HCT116 (cell line): ENCODE measurements at regions of chr11 and their contacts with region 1.

Region 1: GRCh38 chr11:57345555-57346211 is 7.5 kb downstream of the P2RX3 start:
- DNase-seq: peak; percentile 76
- ATAC-seq: peak; percentile 84
- H3K4me3 ChIP-seq: no peak overlapping the region
- H3K27ac ChIP-seq: no peak overlapping the region
- H3K4me1 ChIP-seq: peaks cover 3 to 19% of the 10 kb centered on the region in 2 experiments; a peak in 3 of 4 replicates
- H3K27me3 ChIP-seq: no peaks in the 10 kb centered on the region
- CTCF ChIP-seq: peak; percentile 44 to 69 (median 67); a peak in 5 of 6 replicates
- POLR2A ChIP-seq: no peak
- RAD21 ChIP-seq: peak; percentile 74

Region 2: DNA sequence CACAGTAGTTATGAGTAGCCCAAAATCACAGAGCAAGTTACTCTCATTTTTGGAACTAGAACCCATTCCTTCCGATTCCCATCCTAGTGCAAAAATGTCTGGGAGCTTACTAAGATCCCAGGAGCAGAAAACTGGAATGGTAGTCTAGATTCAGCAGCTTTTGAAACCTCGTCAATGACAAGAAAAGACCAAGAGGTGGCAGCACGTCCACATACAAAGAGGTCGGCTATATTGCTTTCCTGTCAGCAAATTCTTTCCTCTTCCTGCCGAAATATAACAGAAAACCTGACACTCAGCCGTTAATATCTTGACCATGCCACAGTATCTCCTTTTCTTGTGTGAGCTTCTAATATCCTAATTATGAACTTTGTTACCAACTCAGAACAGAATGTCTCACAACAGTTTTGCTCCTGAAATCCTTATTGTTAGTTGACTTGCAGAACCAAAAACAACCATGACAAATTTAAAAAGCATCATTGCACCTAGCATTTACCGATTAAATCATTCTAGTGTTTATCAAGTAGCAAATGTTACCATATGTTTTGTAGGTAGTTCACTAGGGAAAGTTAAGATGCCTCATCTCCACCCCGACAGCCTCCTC is 504.4 kb before region 1 on chr11:
- CTCF ChIA-PET with region 1: interaction called, 4 read pairs
- POLR2A ChIA-PET with region 1: no interaction called
- RAD21 ChIA-PET with region 1: no interaction called
- intact Hi-C with region 1: loop called (anchors 5 kb)
- DNase-seq: peak; percentile 27
- ATAC-seq: peak; percentile 57
- H3K4me3 ChIP-seq: no peak overlapping the region
- H3K27ac ChIP-seq: no peak overlapping the region
- H3K4me1 ChIP-seq: no peaks in the 10 kb centered on the region
- H3K27me3 ChIP-seq: no peaks in the 10 kb centered on the region
- CTCF ChIP-seq: peak; percentile 35 to 65 (median 54); a peak in 5 of 6 replicates
- POLR2A ChIP-seq: no peak
- RAD21 ChIP-seq: peak; percentile 68

Region 3: GRCh38 chr11:57456960-57457642 is 111.4 kb after region 1 on chr11:
- CTCF ChIA-PET with region 1: interaction called, 19 read pairs
- POLR2A ChIA-PET with region 1: interaction called, 4 read pairs
- RAD21 ChIA-PET with region 1: interaction called in 1 of 2 experiments, 3 read pairs
- intact Hi-C with region 1: loop called (anchors 5 kb)
- DNase-seq: peak; percentile 79
- ATAC-seq: peak; percentile 71
- H3K4me3 ChIP-seq: peak overlapping the region in 1 of 2 experiments; percentile 67; a peak in 2 of 4 replicates
- H3K27ac ChIP-seq: no peak overlapping the region
- H3K4me1 ChIP-seq: peaks cover 16 to 42% of the 10 kb centered on the region in 2 experiments; a peak in 3 of 4 replicates
- H3K27me3 ChIP-seq: peaks cover 3% of the 10 kb centered on the region; the same call in 1 of the 2 replicates
- CTCF ChIP-seq: peak; percentile 89 to 99 (median 89)
- POLR2A ChIP-seq: no peak
- RAD21 ChIP-seq: peak; percentile 94

Region 4: GRCh38 chr11:57530596-57531507 is 185.2 kb after region 1 on chr11 and contains the start of gene TIMM10:
- CTCF ChIA-PET with region 1: interaction called, 8 read pairs
- POLR2A ChIA-PET with region 1: no interaction called
- RAD21 ChIA-PET with region 1: no interaction called
- intact Hi-C with region 1: loop called (anchors 2 kb)
- DNase-seq: peak; percentile 99
- ATAC-seq: peak; percentile 95
- H3K4me3 ChIP-seq: peak within 1 kb of the TSS; percentile 64 to 84
- H3K27ac ChIP-seq: peak within 1 kb of the TSS; percentile 61
- H3K4me1 ChIP-seq: peaks cover 16 to 17% of the 10 kb centered on the region in 2 experiments
- H3K27me3 ChIP-seq: no peaks in the 10 kb centered on the region
- CTCF ChIP-seq: no peak
- POLR2A ChIP-seq: peak; percentile 75
- RAD21 ChIP-seq: peak; percentile 16; the same call in 1 of the 2 replicates
- total RNA-seq, gene TIMM10: 65.6 TPM

Region 5: GRCh38 chr11:57903564-57904123 is 558.0 kb after region 1 on chr11:
- CTCF ChIA-PET with region 1: no interaction called
- POLR2A ChIA-PET with region 1: no interaction called
- RAD21 ChIA-PET with region 1: no interaction called
- intact Hi-C with region 1: loop called (anchors 5 kb)
- DNase-seq: peak; percentile 74
- ATAC-seq: peak; percentile 98
- H3K4me3 ChIP-seq: peak overlapping the region; percentile 7 to 24; a peak in 2 of 4 replicates
- H3K27ac ChIP-seq: peak overlapping the region; percentile 38
- H3K4me1 ChIP-seq: peaks cover 27 to 41% of the 10 kb centered on the region in 2 experiments
- H3K27me3 ChIP-seq: no peaks in the 10 kb centered on the region
- CTCF ChIP-seq: no peak
- POLR2A ChIP-seq: no peak
- RAD21 ChIP-seq: 0 out of 2 replicates have a peak, but pooled peaks have one; percentile 26